ENCODE measurements at regions of chr10 and their contacts with region 1.

Region 1: DNA sequence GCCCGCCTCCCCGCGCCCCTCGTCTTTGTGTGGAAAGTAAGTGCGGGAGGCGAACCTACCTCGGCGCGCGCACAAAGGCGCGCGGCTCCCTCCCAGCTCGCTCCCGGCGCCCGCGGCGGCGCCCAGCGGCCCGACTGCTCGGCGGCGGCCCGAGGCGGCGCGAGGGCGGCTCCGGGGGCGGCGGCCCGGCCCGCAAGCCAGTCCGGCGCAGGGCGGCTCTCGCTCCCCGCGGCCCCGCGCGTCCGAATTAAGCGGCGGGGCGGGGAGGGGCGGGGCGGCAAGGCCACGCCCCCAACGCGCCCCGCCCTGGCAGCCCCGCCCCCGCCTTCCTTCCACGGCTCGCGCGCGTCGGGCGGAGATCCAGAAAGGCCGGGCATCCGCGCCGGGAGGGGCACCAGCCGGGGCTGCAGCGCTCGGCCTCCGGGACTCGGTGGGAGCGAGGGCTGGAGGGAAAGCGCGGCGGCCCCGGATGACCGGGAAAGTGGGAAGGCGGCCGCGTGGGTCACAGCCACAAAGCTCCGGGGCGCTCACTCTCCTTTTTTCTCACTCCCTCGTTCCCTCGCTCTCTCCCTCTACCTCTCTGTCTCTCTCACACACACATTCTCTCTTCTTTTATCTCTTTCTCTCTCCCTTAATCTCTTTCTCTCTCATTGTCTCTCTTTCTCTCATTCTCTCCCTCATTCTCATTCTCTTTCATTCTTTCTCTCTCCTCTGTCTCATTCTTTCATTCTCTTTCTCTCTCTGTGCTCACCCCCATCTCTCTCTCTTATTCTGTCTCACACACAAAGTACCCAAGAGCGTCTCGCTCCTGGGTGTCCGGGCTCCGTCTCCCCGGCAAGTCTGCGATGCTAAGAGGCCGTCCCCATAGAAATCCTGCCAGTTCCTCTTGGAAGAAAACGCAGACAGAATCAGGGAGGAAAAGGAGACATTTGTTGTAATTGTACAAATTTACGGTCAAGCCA is 170.2 kb downstream of the FAM107B start:
- DNase-seq: peak; percentile 72
- H3K4me3 Mint-ChIP-seq: peak overlapping the region; percentile 91
- H3K27ac Mint-ChIP-seq: peak overlapping the region; percentile 99
- H3K4me1 Mint-ChIP-seq: peaks cover 78% of the 10 kb centered on the region
- H3K27me3 Mint-ChIP-seq: no peaks in the 10 kb centered on the region

Region 2: DNA sequence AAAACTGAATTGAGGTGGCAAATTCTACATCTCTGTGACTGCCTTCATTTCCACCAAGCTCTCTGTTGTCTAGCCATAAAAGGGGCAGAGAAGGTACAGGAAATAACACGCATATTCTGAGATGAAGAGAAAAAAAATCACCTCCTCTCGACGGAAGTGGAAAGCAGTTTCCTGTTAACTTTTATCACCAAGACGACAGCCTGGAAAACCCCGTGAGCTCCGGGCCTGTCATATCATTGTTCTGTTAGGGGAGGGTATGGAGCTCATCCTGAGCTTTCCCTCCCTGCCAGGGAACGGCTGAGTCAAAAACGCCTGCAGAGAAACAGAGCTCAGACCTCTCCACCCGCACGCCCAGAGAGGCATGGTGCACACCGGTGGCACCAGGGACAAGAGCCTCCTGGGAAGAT is 817.4 kb before region 1 on chr10:
- intact Hi-C with region 1: loop called (anchors 5 kb)
- DNase-seq: peak; percentile 79
- H3K4me3 Mint-ChIP-seq: peak overlapping the region; percentile 68
- H3K27ac Mint-ChIP-seq: peak overlapping the region; percentile 95
- H3K4me1 Mint-ChIP-seq: peaks cover 7% of the 10 kb centered on the region
- H3K27me3 Mint-ChIP-seq: peaks cover 2% of the 10 kb centered on the region

Region 3: DNA sequence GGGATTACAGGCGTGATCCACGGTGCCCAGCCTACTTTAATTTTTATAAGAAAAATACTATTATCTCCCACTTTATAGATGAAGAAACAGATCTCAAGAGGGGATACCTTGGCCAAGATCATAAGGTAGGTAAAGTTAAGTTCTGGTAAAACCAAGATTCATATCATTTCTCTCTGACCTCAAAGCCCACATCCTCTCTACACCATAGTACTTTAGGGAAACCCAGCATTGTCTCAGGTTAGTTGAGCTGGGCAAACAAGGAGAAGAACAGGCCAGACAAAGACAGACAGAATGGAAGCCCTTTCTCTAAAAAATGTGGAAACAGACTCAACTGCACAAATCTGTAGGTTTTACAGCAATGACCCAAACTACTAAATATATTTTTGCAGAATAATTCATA is 76.0 kb before region 1 on chr10:
- intact Hi-C with region 1: loop called (anchors 1 kb)
- DNase-seq: no peak
- H3K4me3 Mint-ChIP-seq: peak overlapping the region; percentile 62
- H3K27ac Mint-ChIP-seq: peak overlapping the region; percentile 82
- H3K4me1 Mint-ChIP-seq: peaks cover 92% of the 10 kb centered on the region
- H3K27me3 Mint-ChIP-seq: no peaks in the 10 kb centered on the region

Region 4: GRCh38 chr10:14588084-14588937 is 16.2 kb before region 1 on chr10:
- intact Hi-C with region 1: loop called (anchors 1 kb)
- DNase-seq: peak; percentile 52
- H3K4me3 Mint-ChIP-seq: peak overlapping the region; percentile 74
- H3K27ac Mint-ChIP-seq: peak overlapping the region; percentile 97
- H3K4me1 Mint-ChIP-seq: peaks cover 94% of the 10 kb centered on the region
- H3K27me3 Mint-ChIP-seq: no peaks in the 10 kb centered on the region

Region 5: DNA sequence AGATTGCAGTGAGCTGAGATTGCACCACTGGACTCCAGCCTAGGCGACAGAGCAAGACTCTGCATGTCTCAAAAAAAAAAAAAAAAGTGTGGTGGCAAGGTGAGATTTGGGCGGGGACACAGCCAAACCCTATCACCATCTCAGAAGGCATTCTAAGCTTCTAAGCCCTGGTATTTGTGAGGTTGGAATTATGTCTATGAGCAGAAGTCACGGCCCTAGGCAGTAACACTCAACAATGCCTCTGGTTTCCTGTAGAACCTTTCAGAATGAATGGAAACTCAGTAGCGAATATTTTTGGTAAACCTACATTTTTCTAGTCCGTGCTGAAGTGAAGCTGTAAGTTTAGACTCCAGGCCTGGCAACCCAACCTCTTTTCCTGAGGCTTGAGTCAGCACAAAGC is 81.9 kb after region 1 on chr10:
- intact Hi-C with region 1: loop called (anchors 1 kb)
- DNase-seq: no peak
- H3K4me3 Mint-ChIP-seq: no peak overlapping the region
- H3K27ac Mint-ChIP-seq: peak overlapping the region; percentile 40
- H3K4me1 Mint-ChIP-seq: peaks cover 38% of the 10 kb centered on the region
- H3K27me3 Mint-ChIP-seq: peaks cover 2% of the 10 kb centered on the region

Region 6: DNA sequence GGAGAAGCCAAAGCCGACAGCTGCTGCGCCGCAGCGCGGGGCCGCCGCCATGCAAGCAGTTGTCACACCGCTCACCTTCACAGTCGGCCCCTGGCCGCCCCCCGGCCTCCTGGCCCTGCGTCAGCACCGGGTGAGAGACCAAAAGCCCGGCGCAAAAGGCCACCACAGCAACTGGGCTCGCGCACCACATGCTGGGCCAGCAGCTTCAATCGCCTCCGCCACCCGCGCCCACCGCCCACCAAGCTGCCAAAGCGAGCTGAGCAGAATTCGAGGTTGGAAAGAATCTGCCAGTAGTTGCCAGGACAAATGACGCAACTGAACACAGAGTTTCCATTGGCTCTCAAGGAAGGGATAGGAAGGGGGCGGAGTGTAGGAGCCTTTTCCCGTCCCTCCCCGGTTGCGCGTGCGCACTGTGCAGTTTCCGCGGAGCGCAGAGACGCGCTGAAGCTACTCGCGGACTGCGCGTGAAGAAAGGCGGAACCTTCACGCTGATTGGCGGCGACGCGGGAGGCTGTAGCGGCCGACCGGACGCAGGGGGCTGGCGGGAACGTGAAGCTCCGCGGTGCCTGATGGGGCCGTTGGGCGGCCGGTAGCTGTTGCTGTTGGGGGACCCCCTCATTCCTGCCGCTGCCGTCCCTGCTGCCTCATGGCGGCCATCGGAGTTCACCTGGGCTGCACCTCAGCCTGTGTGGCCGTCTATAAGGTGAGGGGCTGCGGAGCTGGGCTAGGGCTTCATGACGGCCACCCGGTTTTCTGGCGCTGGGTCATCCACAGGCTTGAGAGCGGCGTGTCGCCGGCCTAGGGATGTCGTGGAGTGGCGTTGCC is 233.5 kb after region 1 on chr10 and contains the starts of genes CDNF, HSPA14 and MSANTD7:
- intact Hi-C with region 1: loop called (anchors 1 kb)
- DNase-seq: peak; percentile 100
- H3K4me3 Mint-ChIP-seq: peak within 1 kb of the TSS; percentile 93
- H3K27ac Mint-ChIP-seq: peak within 1 kb of the TSS; percentile 94
- H3K4me1 Mint-ChIP-seq: peaks cover 20% of the 10 kb centered on the region
- H3K27me3 Mint-ChIP-seq: no peaks in the 10 kb centered on the region
- total RNA-seq, gene CDNF: 0.47 and 0.93 TPM in 2 replicates
- total RNA-seq, gene HSPA14: 36.6 and 38.0 TPM in 2 replicates
- total RNA-seq, gene MSANTD7: 26.7 and 29.6 TPM in 2 replicates

Region 7: DNA sequence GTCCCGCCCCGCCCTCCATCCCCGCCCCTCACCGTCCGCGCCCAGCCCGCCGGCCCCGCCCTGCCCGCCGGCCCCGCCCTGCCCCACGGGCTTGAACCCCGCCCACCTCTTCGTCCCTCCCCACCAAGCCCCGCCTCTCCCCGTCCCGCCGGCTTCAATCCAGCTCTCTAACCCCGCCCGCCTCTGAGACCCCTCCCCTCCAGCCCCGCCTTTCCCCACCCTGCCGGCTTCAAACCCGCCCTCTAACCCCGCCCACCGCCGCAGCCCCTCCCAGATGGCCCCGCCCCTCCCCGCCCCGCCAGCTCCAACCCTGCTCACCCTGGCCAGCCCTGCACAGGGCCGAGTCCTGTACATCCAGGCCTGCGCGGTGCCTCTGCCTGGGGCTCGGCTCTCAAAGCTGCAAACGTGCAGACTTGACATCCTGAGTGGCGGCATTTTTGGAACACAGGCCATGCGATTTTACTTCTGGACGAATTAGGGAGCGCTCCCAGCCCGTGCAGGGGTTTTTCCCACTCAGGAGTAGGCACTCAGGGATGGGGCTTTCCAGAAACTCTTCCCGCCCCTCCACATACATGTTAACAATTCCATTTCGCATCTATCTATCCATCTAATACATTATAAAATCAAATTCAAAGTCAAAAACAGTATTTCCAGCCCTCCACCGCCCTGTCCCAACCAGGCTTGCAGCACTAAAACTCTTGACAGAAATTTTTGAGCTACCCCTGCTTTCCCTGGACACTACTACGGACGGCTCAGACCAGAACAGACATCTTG is 564.5 kb after region 1 on chr10:
- intact Hi-C with region 1: loop called (anchors 1 kb)
- DNase-seq: peak; percentile 84
- H3K4me3 Mint-ChIP-seq: peak overlapping the region; percentile 55
- H3K27ac Mint-ChIP-seq: peak overlapping the region; percentile 74
- H3K4me1 Mint-ChIP-seq: peaks cover 51% of the 10 kb centered on the region
- H3K27me3 Mint-ChIP-seq: peaks cover 5% of the 10 kb centered on the region